Endothelial cell of umbilical vein (primary cell): ENCODE measurements at regions of chr5 and their contacts with region 1.

Region 1: DNA sequence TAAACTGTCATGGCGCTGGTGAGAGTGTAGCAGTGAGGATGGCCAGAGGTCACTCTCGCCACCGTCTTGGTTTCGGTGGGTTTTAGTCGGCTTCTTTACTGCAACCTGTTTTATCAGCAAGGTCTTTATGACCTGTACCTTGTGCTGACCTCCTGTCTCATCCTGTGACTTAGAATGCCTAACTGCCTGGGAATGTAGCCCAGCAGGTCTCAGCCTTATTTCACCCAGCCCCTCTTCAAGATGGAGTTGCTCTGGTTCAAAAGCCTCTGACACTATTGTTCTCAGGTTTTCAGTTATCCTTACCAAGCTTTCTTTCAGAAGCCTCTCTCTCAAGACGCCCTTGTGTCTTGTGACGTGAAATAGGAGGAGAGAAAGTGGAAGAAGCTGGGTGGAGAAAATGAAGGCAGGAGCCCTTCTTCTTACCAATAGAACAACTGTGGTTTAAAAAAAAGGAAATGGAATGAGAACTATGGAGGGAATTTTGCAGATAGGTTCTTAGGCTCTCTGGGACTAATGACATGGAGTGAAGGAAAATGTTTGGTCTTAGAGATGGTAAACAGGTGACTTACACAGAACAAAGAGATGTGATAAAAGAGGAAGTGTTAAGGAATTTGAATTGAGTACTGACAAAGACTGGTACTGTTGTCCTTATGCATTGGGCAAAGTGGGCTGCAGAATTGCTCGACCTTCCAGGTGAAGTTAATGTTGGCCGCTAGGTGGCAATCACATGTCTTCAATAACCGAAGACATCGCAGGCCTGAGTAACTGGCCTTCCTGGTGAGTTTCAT is 133.3 kb upstream of the RAI14 start:
- DNase-seq: no peak
- H3K4me3 ChIP-seq: no peak overlapping the region
- H3K27ac ChIP-seq: peak overlapping the region; percentile 84
- H3K4me1 ChIP-seq: peaks cover 42% of the 10 kb centered on the region
- H3K27me3 ChIP-seq: no peaks in the 10 kb centered on the region
- CTCF ChIP-seq: peak; percentile 65
- POLR2A ChIP-seq: no peak

Region 2: DNA sequence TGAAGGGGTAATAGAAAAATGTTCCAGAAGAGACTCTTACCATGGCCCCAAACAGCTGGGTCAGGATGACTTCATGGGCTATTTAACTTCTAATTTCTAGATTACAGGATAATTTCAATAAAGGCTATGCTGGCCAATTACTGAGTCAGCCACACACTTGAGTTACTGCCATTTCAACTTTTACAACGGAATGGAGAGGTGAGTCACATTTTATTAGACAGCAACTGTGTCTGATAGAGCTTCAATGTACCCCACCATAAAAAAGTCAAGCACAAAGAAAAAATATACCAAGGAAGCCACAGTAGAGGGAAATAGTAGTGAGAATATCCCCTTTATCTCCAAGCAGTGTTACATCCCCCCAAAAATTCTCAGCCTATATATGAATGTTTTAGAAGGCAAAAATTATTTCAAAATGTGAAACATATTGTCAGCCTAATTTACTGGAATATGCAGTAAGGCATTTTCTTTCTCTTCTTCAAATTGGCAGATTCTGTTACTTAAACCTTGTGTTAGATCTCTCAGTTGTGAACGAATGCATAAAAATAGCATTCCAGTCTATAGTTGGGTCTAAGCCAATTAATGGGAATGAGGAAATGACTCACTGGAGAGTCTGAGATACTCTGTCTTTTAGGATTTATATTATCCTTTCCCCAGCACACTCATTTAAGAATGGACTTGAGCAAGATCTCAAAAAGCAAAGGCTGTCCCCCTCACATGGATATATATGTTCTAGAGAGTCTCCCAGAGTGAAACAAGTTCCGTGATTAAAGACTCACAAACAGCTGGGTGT is 86.3 kb after region 1 on chr5:
- CTCF ChIA-PET with region 1: interaction called, 6 read pairs
- POLR2A ChIA-PET with region 1: no interaction called
- dilution Hi-C with region 1: no loop called
- intact Hi-C with region 1: loop called (anchors 1 kb)
- DNase-seq: peak; percentile 95
- H3K4me3 ChIP-seq: peak overlapping the region in 1 of 3 experiments; percentile 25
- H3K27ac ChIP-seq: peak overlapping the region; percentile 99
- H3K4me1 ChIP-seq: peaks cover 31% of the 10 kb centered on the region
- H3K27me3 ChIP-seq: no peaks in the 10 kb centered on the region
- CTCF ChIP-seq: no peak
- POLR2A ChIP-seq: no peak

Region 3: GRCh38 chr5:34656001-34656699 is 133.4 kb after region 1 on chr5 and contains the start of gene RAI14:
- CTCF ChIA-PET with region 1: interaction called, 33 read pairs
- POLR2A ChIA-PET with region 1: interaction called, 7 read pairs
- dilution Hi-C with region 1: no loop called
- intact Hi-C with region 1: loop called (anchors 1 kb)
- DNase-seq: peak; percentile 93
- H3K4me3 ChIP-seq: peak within 1 kb of the TSS; percentile 96 to 99 (median 98)
- H3K27ac ChIP-seq: peak within 1 kb of the TSS; percentile 96
- H3K4me1 ChIP-seq: peaks cover 53% of the 10 kb centered on the region
- H3K27me3 ChIP-seq: no peaks in the 10 kb centered on the region
- CTCF ChIP-seq: peak; percentile 8 to 24
- POLR2A ChIP-seq: peak; percentile 87
- total RNA-seq, gene RAI14: 369 and 390 TPM in 2 replicates

Region 4: DNA sequence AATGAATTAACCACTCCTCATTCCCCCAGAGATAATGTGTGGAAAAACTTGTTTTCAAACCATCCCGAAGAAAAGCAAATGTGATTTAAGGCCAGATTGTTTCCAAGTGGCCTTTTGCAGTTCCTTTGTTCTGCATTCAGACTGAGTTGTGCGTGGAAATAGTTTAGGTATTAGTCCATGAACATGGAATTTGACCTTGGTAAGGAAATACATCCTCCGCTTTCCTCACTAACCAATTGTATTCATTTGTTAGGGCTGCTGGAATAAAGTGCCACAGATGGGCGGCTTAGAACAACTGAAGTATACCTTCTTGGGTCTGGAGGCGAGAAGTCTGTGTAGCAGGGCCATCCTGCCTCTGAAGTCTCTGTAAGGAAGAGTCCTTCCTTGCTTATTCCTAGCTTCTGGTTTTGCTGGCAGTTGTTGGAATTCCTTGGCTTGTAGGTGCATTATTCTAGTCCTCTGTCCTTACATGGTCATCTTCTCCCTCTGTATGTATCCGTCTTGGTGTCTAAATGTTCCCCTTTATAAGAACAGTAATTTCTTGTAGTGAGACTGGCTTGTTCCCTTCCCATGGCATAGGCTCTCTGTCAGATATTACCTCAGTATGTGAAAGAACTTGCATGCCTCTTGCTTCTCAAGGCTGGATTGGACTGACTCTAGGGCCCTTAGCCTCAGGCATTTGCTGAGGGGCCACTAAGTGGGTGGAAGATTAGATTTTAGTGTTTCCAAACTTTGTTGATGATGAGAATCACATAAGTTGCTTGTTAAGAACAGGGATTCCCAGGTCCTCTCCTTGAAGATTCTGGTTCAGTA is 187.3 kb after region 1 on chr5:
- CTCF ChIA-PET with region 1: interaction called, 6 read pairs
- POLR2A ChIA-PET with region 1: no interaction called
- dilution Hi-C with region 1: no loop called
- intact Hi-C with region 1: loop called (anchors 2 kb)
- DNase-seq: peak; percentile 94
- H3K4me3 ChIP-seq: peak overlapping the region in 1 of 3 experiments; percentile 3
- H3K27ac ChIP-seq: peak overlapping the region; percentile 97
- H3K4me1 ChIP-seq: peaks cover 96% of the 10 kb centered on the region
- H3K27me3 ChIP-seq: no peaks in the 10 kb centered on the region
- CTCF ChIP-seq: no peak
- POLR2A ChIP-seq: peak; percentile 84

Region 5: GRCh38 chr5:34789021-34789531 is 266.3 kb after region 1 on chr5:
- CTCF ChIA-PET with region 1: interaction called, 3 read pairs
- POLR2A ChIA-PET with region 1: no interaction called
- dilution Hi-C with region 1: no loop called
- intact Hi-C with region 1: loop called (anchors 5 kb)
- DNase-seq: peak; percentile 95
- H3K4me3 ChIP-seq: no peak overlapping the region
- H3K27ac ChIP-seq: peak overlapping the region; percentile 81
- H3K4me1 ChIP-seq: peaks cover 46% of the 10 kb centered on the region
- H3K27me3 ChIP-seq: no peaks in the 10 kb centered on the region
- CTCF ChIP-seq: no peak
- POLR2A ChIP-seq: peak; percentile 84

Region 6: GRCh38 chr5:35230038-35230631 is 707.3 kb after region 1 on chr5 and contains the start of gene PRLR:
- CTCF ChIA-PET with region 1: no interaction called
- POLR2A ChIA-PET with region 1: no interaction called
- dilution Hi-C with region 1: no loop called
- intact Hi-C with region 1: no loop called
- DNase-seq: no peak
- H3K4me3 ChIP-seq: no peak within 1 kb of the TSS
- H3K27ac ChIP-seq: no peak within 1 kb of the TSS
- H3K4me1 ChIP-seq: no peaks in the 10 kb centered on the region
- H3K27me3 ChIP-seq: peaks cover 21 to 29% of the 10 kb centered on the region in 2 experiments
- CTCF ChIP-seq: no peak
- POLR2A ChIP-seq: no peak
- total RNA-seq, gene PRLR: not detected in 2 replicates